PC-3 (cell line): ENCODE measurements at regions of chr15 and their contacts with region 1.

Region 1: DNA sequence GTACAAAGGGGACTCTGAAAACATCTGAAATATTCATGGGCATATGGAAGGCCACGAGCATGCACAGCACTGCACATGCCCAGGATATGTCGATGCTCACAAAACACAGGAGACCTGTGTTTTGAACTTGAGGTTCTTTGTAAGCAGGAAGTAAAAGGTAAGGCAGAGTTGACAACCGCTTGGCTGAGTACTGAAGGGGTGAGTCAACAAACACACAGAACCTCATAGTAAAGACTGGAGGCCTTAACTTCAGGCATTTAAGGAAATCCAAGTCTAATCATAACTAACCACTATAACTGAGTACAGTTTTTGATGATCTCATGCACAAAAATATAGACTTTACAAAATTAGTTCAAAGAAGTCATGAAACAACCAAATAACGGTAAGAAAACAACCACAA is 80.6 kb downstream of the MYO9A start:
- DNase-seq: peak; percentile 68
- ATAC-seq: peak; percentile 81
- H3K4me3 ChIP-seq: no peak overlapping the region
- H3K27ac ChIP-seq: no peak overlapping the region
- H3K4me1 ChIP-seq: peaks cover 11% of the 10 kb centered on the region
- H3K27me3 ChIP-seq: no peaks in the 10 kb centered on the region
- CTCF ChIP-seq: no peak

Region 2: DNA sequence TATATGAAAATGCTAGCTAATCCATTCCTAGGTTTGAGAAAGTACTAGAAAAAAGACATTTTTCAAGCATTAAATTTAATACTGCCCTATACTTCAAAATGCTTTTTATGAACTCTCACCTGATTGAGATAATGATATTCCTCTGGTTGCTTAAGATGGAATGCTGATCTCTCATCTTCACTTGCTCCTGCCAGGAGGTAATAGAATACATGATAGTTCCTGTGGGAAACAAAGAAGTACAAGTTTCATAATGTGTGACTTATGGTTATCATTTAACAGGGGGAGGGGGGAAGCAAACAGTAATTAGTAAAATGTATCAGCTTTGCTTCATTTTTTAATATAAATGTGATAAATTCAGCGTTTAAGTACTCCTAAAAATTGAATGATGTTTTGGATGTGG is 16.5 kb before region 1 on chr15:
- CTCF ChIA-PET with region 1: no interaction called
- POLR2A ChIA-PET with region 1: no interaction called
- intact Hi-C with region 1: no loop called
- DNase-seq: no peak
- ATAC-seq: no peak
- H3K4me3 ChIP-seq: no peak overlapping the region
- H3K27ac ChIP-seq: no peak overlapping the region
- H3K4me1 ChIP-seq: no peaks in the 10 kb centered on the region
- H3K27me3 ChIP-seq: no peaks in the 10 kb centered on the region
- CTCF ChIP-seq: no peak

Region 3: DNA sequence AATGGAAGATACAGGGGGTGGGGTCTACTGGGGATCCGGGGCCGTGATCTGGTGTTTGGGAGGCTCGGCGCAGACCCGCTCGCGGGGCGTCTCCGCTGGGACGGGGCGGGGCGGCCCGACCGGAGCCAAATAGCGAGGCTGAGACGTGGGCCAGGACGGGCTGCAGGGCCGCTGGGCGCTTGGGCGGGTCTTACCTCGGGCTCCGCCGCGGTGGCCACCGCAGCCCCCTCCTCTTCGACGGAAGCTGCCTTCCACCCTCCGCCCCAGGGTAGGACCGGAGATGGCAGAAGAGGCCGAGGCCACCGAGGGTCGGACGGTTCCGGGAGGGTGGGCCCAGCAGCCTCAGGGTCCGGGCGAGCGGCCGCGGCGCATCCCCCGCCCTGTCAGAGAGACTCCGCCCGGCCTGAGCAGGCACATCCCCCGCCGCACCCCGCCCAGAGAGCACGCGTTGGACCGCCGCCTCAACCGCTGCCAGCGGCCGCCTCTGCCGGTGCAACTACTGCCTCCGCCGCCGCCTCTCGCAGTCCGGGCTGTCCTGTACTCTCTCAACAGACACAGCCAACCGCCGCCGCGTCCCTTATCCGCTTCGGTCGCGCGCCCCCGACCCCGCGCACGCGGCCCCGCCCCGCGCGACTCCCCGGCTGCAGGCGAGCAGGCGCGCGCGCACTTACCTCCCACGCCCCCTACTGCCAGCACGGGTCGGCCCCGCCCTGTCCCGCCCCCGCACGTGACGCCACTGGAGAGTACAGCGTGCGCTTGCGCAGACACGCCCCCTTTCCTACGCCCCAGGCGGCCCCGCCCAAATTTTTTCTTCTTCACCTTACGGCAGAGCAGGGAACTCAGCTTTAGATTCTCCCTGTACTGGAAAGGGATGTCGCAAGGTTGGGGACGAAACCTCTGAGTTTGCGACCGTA is 80.4 kb after region 1 on chr15 and contains the start of gene MYO9A:
- CTCF ChIA-PET with region 1: no interaction called
- POLR2A ChIA-PET with region 1: no interaction called
- intact Hi-C with region 1: loop called (anchors 10 kb)
- DNase-seq: peak; percentile 98
- ATAC-seq: peak; percentile 84
- H3K4me3 ChIP-seq: peak within 1 kb of the TSS; percentile 78
- H3K27ac ChIP-seq: peak within 1 kb of the TSS; percentile 91
- H3K4me1 ChIP-seq: peaks cover 10% of the 10 kb centered on the region; the same call in 1 of the 2 replicates
- H3K27me3 ChIP-seq: no peaks in the 10 kb centered on the region
- CTCF ChIP-seq: no peak
- total RNA-seq, gene MYO9A: 14.3 and 18.3 TPM in 2 replicates

Region 4: GRCh38 chr15:72599855-72600464 is 562.6 kb after region 1 on chr15:
- CTCF ChIA-PET with region 1: no interaction called
- POLR2A ChIA-PET with region 1: interaction called, 11 read pairs
- intact Hi-C with region 1: no loop called
- DNase-seq: peak; percentile 67
- ATAC-seq: peak; percentile 76
- H3K4me3 ChIP-seq: no peak overlapping the region
- H3K27ac ChIP-seq: no peak overlapping the region
- H3K4me1 ChIP-seq: no peaks in the 10 kb centered on the region
- H3K27me3 ChIP-seq: no peaks in the 10 kb centered on the region
- CTCF ChIP-seq: peak; percentile 76